ENCODE measurements at regions of chr15 and their contacts with region 1.

Region 1: GRCh38 chr15:82985688-82986441 is at the start of gene RAMAC:
- DNase-seq: peak; percentile 85 to 95
- ATAC-seq: peak; percentile 97 to 99 (median 98)
- H3K4me3 ChIP-seq: peak within 1 kb of the TSS; percentile 65 to 95 (median 76)
- H3K27ac ChIP-seq: peak within 1 kb of the TSS; percentile 10 to 91 (median 75)
- H3K4me1 ChIP-seq: peaks cover 3 to 21% (median 15%) of the 10 kb centered on the region in 9 donors
- H3K27me3 ChIP-seq: no peaks in the 10 kb centered on the region
- CTCF ChIP-seq: no peak
- total RNA-seq, gene RAMAC: 12.4 to 17.8 (median 14.4) TPM

Region 2: GRCh38 chr15:81897057-81897677 is 1088.7 kb before region 1 on chr15:
- intact Hi-C with region 1: no loop called
- DNase-seq: no peak
- ATAC-seq: no peak
- H3K4me3 ChIP-seq: no peak overlapping the region
- H3K27ac ChIP-seq: no peak overlapping the region
- H3K4me1 ChIP-seq: no peaks in the 10 kb centered on the region
- H3K27me3 ChIP-seq: no peaks in the 10 kb centered on the region
- CTCF ChIP-seq: no peak

Region 3: GRCh38 chr15:82809404-82810060 is 176.3 kb before region 1 on chr15 and contains the start of gene WHAMM:
- intact Hi-C with region 1: loop called in 1 of 10 experiments (anchors 5 kb)
- DNase-seq: peak; percentile 98 to 99
- ATAC-seq: peak; percentile 94 to 98 (median 96)
- H3K4me3 ChIP-seq: peak within 1 kb of the TSS; percentile 65 to 96 (median 89)
- H3K27ac ChIP-seq: peak within 1 kb of the TSS; percentile 91 to 100 (median 99)
- H3K4me1 ChIP-seq: peaks cover 11 to 49% (median 33%) of the 10 kb centered on the region in 9 donors
- H3K27me3 ChIP-seq: no peaks in the 10 kb centered on the region
- CTCF ChIP-seq: peak in 1 of 9 donors; percentile 42
- total RNA-seq, gene WHAMM: 5.4 to 8.1 (median 6.8) TPM

Region 4: GRCh38 chr15:82849556-82850512 is 136.0 kb before region 1 on chr15:
- intact Hi-C with region 1: loop called in 6 of 10 experiments (anchors 5 to 10 kb)
- DNase-seq: peak; percentile 74 to 82
- ATAC-seq: peak; percentile 88 to 96 (median 92)
- H3K4me3 ChIP-seq: peak overlapping the region in 5 of 10 donors; percentile 9 to 36 (median 19)
- H3K27ac ChIP-seq: peak overlapping the region in 5 of 10 donors; percentile 16 to 62 (median 33)
- H3K4me1 ChIP-seq: peaks cover 0 to 16% (median 13%) of the 10 kb centered on the region in 9 donors
- H3K27me3 ChIP-seq: no peaks in the 10 kb centered on the region
- CTCF ChIP-seq: peak; percentile 50 to 90 (median 76)

Region 5: DNA sequence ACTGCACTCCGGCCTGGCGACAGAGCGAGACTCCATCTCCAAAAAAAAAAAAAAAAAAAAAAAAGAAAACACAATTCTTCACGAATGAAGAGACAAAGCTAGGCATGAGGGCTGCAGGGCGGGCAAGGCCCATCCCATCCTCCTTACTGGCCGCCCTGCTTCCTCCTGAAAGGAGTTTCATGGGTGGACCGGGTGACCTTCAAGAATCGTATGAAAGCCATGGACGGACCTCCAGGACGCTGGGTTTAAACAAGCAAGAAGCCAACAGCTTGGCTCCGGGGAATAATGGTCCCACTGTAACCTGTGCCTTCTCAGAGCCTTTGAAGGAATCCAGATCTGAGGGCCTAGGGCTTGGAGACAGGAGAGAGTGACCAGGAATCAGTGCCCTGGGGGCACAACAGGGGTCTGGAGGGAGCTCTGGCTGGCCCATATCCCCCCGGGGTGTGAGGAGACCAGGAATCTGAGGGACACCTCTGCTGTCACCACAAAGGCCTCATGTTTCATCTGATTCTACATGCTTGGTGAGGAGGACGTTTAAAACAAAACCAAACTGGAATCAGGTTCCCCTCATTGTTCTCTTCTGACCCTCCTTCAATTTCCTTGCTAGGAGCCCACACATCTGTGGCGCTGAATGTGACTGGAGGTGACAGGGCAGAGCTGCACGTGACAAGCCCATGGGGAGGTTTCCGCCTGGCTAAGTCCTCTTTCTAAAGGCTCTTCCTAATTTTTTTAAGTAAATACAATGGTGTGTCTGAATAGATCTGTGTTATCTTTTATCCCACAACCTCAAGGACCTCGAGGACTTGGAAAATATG is 130.4 kb before region 1 on chr15:
- intact Hi-C with region 1: loop called in 6 of 10 experiments (anchors 5 to 10 kb)
- DNase-seq: peak in 1 of 2 donors; percentile 17
- ATAC-seq: peak in 7 of 8 donors; percentile 37 to 80 (median 53)
- H3K4me3 ChIP-seq: peak overlapping the region in 3 of 10 donors; percentile 4 to 19 (median 5)
- H3K27ac ChIP-seq: peak overlapping the region in 5 of 10 donors; percentile 20 to 60 (median 58)
- H3K4me1 ChIP-seq: peaks cover 0 to 7% (median 0%) of the 10 kb centered on the region in 9 donors
- H3K27me3 ChIP-seq: no peaks in the 10 kb centered on the region
- CTCF ChIP-seq: no peak

Region 6: GRCh38 chr15:82928711-82929110 is 57.2 kb before region 1 on chr15:
- intact Hi-C with region 1: no loop called
- DNase-seq: no peak
- ATAC-seq: no peak
- H3K4me3 ChIP-seq: no peak overlapping the region
- H3K27ac ChIP-seq: no peak overlapping the region
- H3K4me1 ChIP-seq: peaks cover 0 to 11% (median 0%) of the 10 kb centered on the region in 9 donors
- H3K27me3 ChIP-seq: no peaks in the 10 kb centered on the region
- CTCF ChIP-seq: no peak

Region 7: GRCh38 chr15:83053151-83053550 is 67.3 kb after region 1 on chr15:
- intact Hi-C with region 1: no loop called
- DNase-seq: no peak
- ATAC-seq: no peak
- H3K4me3 ChIP-seq: no peak overlapping the region
- H3K27ac ChIP-seq: no peak overlapping the region
- H3K4me1 ChIP-seq: peaks cover 4 to 21% (median 15%) of the 10 kb centered on the region in 9 donors
- H3K27me3 ChIP-seq: no peaks in the 10 kb centered on the region
- CTCF ChIP-seq: no peak

Region 8: DNA sequence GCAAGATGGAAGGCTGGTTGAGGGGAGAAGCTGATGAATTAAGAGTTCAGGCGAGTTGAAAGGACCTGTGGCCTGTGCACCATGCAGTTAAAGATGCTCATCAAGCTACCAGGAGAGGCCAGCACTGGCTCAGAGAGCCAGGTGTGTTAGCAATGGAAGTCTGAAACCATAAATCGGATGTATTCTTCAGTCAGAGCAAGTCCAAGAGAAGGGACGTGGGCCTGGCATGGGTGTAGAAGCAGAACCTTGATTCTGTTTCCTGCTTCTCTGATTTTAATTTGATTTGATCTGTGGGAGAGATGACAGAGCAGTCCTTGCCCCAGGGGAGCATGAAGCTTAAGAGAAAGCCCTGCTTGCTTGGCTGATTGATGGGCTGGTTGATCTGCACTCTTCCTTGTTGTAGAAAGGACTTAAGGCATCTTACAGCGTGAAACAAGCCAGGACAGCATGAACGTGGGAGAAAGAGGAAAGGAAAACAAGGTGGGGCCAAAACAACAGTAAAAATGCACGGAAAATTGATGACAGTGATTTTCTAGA is 132.5 kb after region 1 on chr15:
- intact Hi-C with region 1: no loop called
- DNase-seq: no peak
- ATAC-seq: no peak
- H3K4me3 ChIP-seq: no peak overlapping the region
- H3K27ac ChIP-seq: no peak overlapping the region
- H3K4me1 ChIP-seq: peaks cover 0 to 22% (median 6%) of the 10 kb centered on the region in 9 donors
- H3K27me3 ChIP-seq: no peaks in the 10 kb centered on the region
- CTCF ChIP-seq: no peak

Measured in heart right ventricle (tissue), 16 donors.